ENCODE measurements at regions of chr15 and their contacts with region 1.

Region 1: DNA sequence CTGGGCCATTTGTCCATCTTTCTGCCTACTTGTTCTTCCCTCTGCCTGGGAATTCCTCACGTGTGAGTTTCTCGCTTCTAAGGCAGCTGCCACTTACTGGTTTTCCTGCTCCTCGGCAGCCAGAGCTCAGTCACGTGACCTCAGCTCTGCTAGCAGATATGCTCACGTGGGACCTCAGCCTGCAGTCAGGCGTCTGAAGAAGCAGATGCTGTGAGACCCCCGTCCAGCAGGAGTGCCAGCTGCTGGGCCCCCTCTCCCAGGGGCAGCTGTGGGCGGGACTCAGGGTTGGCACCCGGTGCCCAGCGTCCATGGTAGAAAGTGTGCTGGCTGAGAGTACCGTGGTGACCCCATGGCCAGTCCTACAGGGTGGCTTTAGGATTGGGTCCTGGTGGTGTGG is 161.3 kb upstream of the TLE3 start:
- DNase-seq: no peak
- ATAC-seq: peak; percentile 33
- H3K4me3 Mint-ChIP-seq: peak overlapping the region; percentile 72
- H3K27ac Mint-ChIP-seq: peak overlapping the region; percentile 87
- H3K4me1 Mint-ChIP-seq: peaks cover 55% of the 10 kb centered on the region
- H3K27me3 Mint-ChIP-seq: peaks cover 8% of the 10 kb centered on the region

Region 2: GRCh38 chr15:70219256-70219895 is 39.6 kb before region 1 on chr15:
- POLR2A ChIA-PET with region 1: no interaction called
- DNase-seq: no peak
- ATAC-seq: no peak
- H3K4me3 Mint-ChIP-seq: no peak overlapping the region
- H3K27ac Mint-ChIP-seq: no peak overlapping the region
- H3K4me1 Mint-ChIP-seq: peaks cover 11% of the 10 kb centered on the region
- H3K27me3 Mint-ChIP-seq: peaks cover 8% of the 10 kb centered on the region

Region 3: DNA sequence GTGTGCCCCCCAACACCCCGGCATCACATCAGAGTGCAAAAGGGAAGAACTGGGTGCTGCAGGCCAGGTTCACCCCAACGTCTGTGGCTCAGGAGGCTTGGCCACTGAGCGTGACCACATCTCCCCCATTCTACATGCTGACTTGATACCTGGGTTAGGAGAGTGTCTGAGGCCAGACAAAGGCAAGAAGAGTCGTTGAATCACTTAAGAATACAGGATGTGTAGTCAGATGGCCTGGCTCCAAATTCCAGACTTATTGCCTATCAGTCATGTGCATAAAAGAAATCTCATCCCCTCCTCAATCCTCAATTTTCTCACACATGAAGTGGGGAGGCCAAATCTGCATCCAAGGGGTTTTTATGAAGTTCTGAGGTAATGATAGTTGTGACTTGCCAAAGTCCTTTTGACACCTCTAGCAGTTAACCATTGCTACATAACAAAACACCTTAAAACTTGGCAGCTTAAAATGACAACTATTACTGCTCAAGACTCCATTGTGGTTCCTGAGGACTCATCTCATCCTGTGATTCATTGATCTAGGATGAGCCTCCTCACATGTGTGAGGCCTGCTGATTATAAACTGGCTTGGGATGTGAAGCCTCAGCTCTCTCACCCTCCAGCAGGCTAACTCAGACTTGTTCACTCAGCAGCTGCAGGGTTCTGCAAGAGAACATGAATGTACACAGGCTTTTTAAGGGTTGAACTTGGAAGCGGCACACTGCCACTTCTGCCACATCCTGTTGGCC is 22.5 kb before region 1 on chr15:
- POLR2A ChIA-PET with region 1: interaction called, 11 read pairs
- DNase-seq: no peak
- ATAC-seq: peak; percentile 49
- H3K4me3 Mint-ChIP-seq: no peak overlapping the region
- H3K27ac Mint-ChIP-seq: peak overlapping the region; percentile 31
- H3K4me1 Mint-ChIP-seq: peaks cover 45% of the 10 kb centered on the region
- H3K27me3 Mint-ChIP-seq: peaks cover 6% of the 10 kb centered on the region

Measured in activated naive CD8-positive, alpha-beta T cell treated with anti-CD3 and anti-CD28 coated beads, Interleukin-2, amount 10 ng/mL, durations not matched to agents 7 days and 5 days (primary cell).